Activated CD4-positive, alpha-beta memory T cell treated with anti-CD3 and anti-CD28 coated beads for 36 hours (primary cell): ENCODE measurements at regions of chr20 and their contacts with region 1.

Region 1: GRCh38 chr20:31723319-31724078 is 831 bp upstream of the BCL2L1 start:
- DNase-seq: peak; percentile 99
- H3K4me3 Mint-ChIP-seq: peak overlapping the region; percentile 98
- H3K27ac Mint-ChIP-seq: peak overlapping the region; percentile 96
- H3K4me1 Mint-ChIP-seq: peaks cover 5% of the 10 kb centered on the region
- H3K27me3 Mint-ChIP-seq: no peaks in the 10 kb centered on the region

Region 2: DNA sequence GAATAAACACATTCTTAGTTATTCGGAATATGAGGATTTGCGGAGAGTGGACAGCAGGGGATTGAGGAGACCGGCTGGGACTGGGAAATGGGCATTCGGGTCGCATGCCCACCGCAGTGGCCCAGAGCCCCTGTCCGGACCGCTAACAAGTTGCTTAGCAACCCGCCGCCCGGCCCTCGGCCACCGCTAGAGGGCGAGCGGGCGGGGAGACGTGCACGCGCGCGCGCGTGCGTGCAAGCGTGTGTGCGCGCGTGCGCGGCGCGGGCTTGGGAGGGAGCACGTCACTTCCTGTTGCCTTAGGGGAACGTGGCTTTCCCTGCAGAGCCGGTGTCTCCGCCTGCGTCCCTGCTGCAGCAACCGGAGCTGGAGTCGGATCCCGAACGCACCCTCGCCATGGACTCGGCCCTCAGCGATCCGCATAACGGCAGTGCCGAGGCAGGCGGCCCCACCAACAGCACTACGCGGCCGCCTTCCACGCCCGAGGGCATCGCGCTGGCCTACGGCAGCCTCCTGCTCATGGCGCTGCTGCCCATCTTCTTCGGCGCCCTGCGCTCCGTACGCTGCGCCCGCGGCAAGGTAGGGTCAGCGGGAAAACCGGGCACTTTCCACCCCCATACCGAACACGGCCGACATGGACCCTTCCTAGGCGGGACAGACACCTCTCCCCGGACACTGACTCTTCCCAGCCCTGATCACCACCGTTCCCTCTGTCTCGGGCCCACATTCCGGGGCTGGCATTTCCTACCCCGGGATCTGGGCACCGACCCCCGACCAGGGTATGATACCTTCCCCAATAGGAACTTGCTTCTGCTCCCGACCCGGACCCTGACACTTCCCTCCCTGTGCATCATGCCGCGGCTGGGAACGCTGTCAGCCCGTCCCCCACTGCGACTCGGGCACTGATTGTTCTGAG is 209.1 kb before region 1 on chr20 and contains the start of gene HM13:
- CTCF ChIA-PET with region 1: interaction called, 8 read pairs
- POLR2A ChIA-PET with region 1: no interaction called
- intact Hi-C with region 1: loop called (anchors 2 kb)
- DNase-seq: peak; percentile 92
- H3K4me3 Mint-ChIP-seq: no peak within 1 kb of the TSS
- H3K27ac Mint-ChIP-seq: peak within 1 kb of the TSS; percentile 59
- H3K4me1 Mint-ChIP-seq: peaks cover 9% of the 10 kb centered on the region
- H3K27me3 Mint-ChIP-seq: no peaks in the 10 kb centered on the region
- total RNA-seq, gene HM13: 110 to 111 TPM

Region 3: GRCh38 chr20:31630187-31630790 is 93.2 kb before region 1 on chr20:
- CTCF ChIA-PET with region 1: interaction called, 164 read pairs
- POLR2A ChIA-PET with region 1: interaction called, 7 read pairs
- intact Hi-C with region 1: loop called (anchors 1 kb)
- DNase-seq: peak; percentile 25
- H3K4me3 Mint-ChIP-seq: no peak overlapping the region
- H3K27ac Mint-ChIP-seq: no peak overlapping the region
- H3K4me1 Mint-ChIP-seq: peaks cover 3% of the 10 kb centered on the region
- H3K27me3 Mint-ChIP-seq: no peaks in the 10 kb centered on the region

Region 4: GRCh38 chr20:31667315-31668285 is 55.9 kb before region 1 on chr20:
- CTCF ChIA-PET with region 1: interaction called, 417 read pairs
- POLR2A ChIA-PET with region 1: interaction called, 48 read pairs
- intact Hi-C with region 1: no loop called
- DNase-seq: no peak
- H3K4me3 Mint-ChIP-seq: no peak overlapping the region
- H3K27ac Mint-ChIP-seq: peak overlapping the region; percentile 70
- H3K4me1 Mint-ChIP-seq: peaks cover 65% of the 10 kb centered on the region
- H3K27me3 Mint-ChIP-seq: no peaks in the 10 kb centered on the region

Region 5: DNA sequence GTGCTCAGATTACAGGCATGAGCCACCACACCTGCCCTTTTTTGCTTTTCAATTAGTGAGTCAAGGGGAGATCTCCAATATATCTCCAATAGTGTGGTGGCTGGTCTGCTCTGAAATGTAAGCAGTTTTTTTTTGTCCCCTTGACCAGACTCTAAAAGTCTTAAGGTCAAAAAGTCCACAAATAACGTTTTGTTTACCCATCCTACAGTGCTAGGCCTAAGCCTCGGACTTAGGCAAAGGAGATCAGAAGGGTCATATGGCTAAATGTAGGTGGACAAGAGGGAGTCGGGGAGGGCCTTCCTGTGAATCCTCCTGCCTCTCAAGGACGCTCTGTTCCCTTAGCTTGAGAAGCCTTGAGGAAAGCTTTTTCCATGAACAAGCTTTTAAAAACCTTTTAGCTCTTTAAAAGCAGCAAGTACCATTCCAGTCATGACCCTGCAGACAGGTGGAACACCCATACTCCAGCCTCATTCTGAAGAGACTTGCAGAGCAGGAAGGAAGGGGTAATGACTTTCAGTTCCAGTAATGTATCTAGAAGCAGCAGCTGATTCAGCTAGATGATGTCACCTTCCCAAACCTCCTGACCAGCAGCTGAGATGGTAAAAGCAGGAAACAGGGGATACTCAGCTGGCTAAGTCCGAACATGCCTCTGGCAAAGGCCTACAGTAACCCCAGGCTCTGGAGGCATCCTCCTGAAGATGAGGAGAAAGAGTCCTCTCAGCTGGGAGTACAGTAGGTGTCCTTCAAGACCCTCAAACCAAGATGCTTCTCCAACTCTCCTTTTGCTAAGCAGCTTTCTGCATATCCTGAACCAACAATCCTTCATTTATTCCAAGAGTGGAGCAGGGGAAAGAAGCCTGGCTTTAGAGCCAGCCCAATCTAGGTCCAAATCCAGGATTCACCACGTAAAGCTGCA is 24.4 kb before region 1 on chr20:
- CTCF ChIA-PET with region 1: interaction called, 33 read pairs
- POLR2A ChIA-PET with region 1: interaction called, 13 read pairs
- intact Hi-C with region 1: loop called (anchors 1 kb)
- DNase-seq: peak; percentile 55
- H3K4me3 Mint-ChIP-seq: peak overlapping the region; percentile 29
- H3K27ac Mint-ChIP-seq: peak overlapping the region; percentile 91
- H3K4me1 Mint-ChIP-seq: peaks cover 64% of the 10 kb centered on the region
- H3K27me3 Mint-ChIP-seq: no peaks in the 10 kb centered on the region

Region 6: GRCh38 chr20:31738729-31739561 is 15.4 kb after region 1 on chr20 and contains the start of gene TPX2:
- CTCF ChIA-PET with region 1: interaction called, 34 read pairs
- POLR2A ChIA-PET with region 1: interaction called, 3 read pairs
- intact Hi-C with region 1: loop called (anchors 1 kb)
- DNase-seq: peak; percentile 93
- H3K4me3 Mint-ChIP-seq: no peak within 1 kb of the TSS
- H3K27ac Mint-ChIP-seq: no peak within 1 kb of the TSS
- H3K4me1 Mint-ChIP-seq: peaks cover 5% of the 10 kb centered on the region
- H3K27me3 Mint-ChIP-seq: no peaks in the 10 kb centered on the region
- total RNA-seq, gene TPX2: 149 TPM

Region 7: GRCh38 chr20:31923388-31924331 is 200.2 kb after region 1 on chr20:
- CTCF ChIA-PET with region 1: no interaction called
- POLR2A ChIA-PET with region 1: no interaction called
- intact Hi-C with region 1: no loop called
- DNase-seq: peak; percentile 18
- H3K4me3 Mint-ChIP-seq: no peak overlapping the region
- H3K27ac Mint-ChIP-seq: no peak overlapping the region
- H3K4me1 Mint-ChIP-seq: no peaks in the 10 kb centered on the region
- H3K27me3 Mint-ChIP-seq: peaks cover 28% of the 10 kb centered on the region